Posterior vena cava (tissue), 2 donors: ENCODE measurements at regions of chr2 and their contacts with region 1.

Region 1: DNA sequence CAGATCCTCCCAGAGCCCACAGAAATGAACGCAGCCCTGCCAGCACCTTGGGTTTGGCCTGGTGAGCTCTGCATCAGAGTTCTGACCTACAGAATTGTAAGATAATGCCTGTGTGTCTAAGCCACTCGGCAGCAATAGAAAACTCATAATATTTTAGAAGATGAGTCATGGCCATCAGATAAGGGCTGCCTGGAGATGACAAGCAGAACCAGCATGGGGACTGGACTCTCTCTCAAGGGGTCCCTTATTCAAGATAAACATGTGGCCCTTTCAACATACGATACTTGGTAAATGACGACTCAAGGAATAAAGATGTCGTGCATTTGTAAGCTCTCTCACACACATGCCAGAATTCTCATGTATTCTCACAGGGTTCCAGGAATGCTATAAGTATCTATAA is 8.5 kb upstream of the AGAP1 start:
- DNase-seq: peak; percentile 15

Region 2: DNA sequence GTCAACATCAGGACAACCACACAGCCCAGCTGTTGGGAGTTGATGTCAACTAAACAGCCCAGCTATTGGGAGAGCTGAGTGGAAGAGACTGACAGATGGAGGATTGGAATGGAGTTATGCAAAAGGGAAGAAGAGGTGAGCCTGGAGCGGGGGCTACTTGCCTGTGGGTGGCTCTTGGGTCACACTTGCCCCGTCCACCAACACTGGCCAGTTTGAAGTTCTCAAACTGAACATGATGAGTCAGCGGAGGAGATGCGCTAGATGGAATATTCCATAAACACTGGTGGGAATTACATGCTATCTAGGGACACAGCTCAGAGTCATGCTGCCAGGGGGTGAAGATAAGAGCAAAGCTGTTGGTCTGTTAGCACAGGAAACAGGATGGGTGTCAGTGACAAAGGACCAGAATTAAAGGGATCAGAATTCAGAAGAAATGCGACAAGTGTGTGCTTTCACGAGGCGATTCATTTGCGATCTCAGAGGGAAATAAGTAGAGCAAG is 24.8 kb before region 1 on chr2:
- intact Hi-C with region 1: loop called in 1 of 2 experiments (anchors 2 kb)
- DNase-seq: no peak